GM10248 (cell line): ENCODE measurements at regions of chr2 and their contacts with region 1.

Region 1: DNA sequence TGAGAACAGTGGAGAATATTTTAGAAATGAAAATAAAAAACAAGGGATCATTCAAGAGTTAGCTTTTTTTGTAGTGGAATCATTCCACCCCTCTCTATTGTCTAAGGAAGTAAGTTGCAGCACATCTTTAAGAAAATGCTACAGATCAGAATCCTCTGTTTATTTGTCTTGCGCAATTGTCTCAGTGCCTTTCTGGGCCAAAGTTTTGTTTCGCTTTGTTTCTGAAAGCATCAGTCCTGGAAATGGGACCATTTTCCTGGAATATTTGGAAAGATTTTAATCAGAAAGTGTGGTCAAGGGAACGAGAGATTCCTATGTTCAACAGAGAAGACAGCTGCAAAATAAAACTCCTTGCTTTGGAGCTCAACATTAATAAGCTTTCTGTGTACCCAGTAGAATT is 74.0 kb downstream of the NRXN1 start:
- DNase-seq: no peak
- CTCF ChIP-seq: no peak

Region 2: DNA sequence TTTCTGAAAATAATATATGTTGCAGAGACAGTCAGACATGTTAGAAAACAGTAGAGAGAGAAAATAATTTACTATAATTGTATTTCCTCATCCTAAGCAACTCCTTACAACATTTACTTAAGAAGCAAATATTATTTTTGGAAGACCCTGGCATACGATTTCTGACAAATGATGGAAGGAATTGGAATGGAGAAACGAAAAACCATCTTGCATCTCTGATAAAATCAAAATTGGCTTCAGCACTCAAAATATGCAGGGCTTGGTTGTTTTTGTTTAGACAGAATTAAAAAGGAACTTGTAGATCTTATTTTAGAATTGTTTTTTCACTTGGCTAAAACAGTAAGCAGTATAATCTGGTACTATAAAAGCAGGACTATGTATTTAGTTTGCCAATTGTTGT is 14.1 kb before region 1 on chr2:
- CTCF ChIA-PET with region 1: interaction called, 17 read pairs
- POLR2A ChIA-PET with region 1: no interaction called
- DNase-seq: no peak
- CTCF ChIP-seq: no peak